ENCODE measurements at regions of chr22 and their contacts with region 1.

Region 1: GRCh38 chr22:50001388-50002231 is 11.0 kb downstream of the IL17REL start:
- DNase-seq: no peak
- ATAC-seq: no peak
- H3K4me3 ChIP-seq: no peak overlapping the region
- H3K27ac ChIP-seq: no peak overlapping the region
- H3K4me1 ChIP-seq: peaks cover 10% of the 10 kb centered on the region
- H3K27me3 ChIP-seq: no peaks in the 10 kb centered on the region
- CTCF ChIP-seq: no peak

Region 2: DNA sequence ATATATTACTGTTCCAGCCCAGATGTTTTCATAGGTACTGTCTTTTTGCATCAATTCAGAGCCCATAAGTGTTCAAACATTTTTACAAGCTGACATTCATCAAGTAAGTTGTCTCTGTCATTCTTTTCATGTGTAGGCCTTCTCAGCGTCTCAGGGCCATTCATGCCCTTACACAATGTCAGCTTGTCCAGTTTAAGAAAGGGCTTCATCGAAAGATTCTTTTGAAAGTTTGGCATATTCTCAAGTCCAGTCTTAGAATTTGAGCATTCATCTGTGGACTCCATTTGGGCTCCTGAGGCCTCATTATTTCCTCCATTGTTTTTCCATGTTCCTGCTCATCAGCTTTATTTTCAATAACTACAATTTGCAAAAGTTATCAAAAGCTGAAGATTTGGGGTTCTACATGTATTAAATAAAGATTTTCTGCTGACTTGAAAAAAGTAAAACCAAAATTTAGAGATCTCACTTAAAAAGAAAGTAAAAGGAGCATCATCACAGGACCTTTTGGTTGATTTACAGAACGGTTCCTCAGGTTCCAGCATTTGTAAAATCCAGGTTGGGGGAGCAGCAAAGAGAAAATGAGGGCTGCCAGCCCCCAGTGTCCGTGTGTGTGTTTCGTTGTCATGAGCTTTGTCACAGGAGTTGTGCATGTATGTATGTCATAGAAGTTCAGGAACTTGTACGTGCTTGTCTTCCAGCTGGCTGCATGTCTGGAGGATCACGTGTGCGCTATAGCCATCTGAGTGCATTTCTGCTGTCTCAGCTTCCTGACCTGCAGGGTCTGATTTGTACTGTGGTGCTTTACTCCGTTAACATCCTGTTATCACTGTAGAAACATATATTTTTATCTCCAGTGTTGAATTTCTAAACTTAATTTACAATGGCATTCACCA is 103.8 kb after region 1 on chr22:
- CTCF ChIA-PET with region 1: no interaction called
- POLR2A ChIA-PET with region 1: no interaction called
- in situ Hi-C with region 1: no loop called
- intact Hi-C with region 1: no loop called
- DNase-seq: no peak
- ATAC-seq: no peak
- H3K4me3 ChIP-seq: no peak overlapping the region
- H3K27ac ChIP-seq: no peak overlapping the region
- H3K4me1 ChIP-seq: no peaks in the 10 kb centered on the region
- H3K27me3 ChIP-seq: no peaks in the 10 kb centered on the region
- CTCF ChIP-seq: no peak

Region 3: GRCh38 chr22:50139843-50140415 is 138.3 kb after region 1 on chr22:
- CTCF ChIA-PET with region 1: no interaction called
- POLR2A ChIA-PET with region 1: interaction called, 11 read pairs
- in situ Hi-C with region 1: no loop called
- intact Hi-C with region 1: no loop called
- DNase-seq: no peak
- ATAC-seq: no peak
- H3K4me3 ChIP-seq: no peak overlapping the region
- H3K27ac ChIP-seq: no peak overlapping the region
- H3K4me1 ChIP-seq: peaks cover 3% of the 10 kb centered on the region; the same call in 1 of the 2 replicates
- H3K27me3 ChIP-seq: no peaks in the 10 kb centered on the region
- CTCF ChIP-seq: no peak

Region 4: GRCh38 chr22:50200461-50201190 is 199.0 kb after region 1 on chr22 and contains the start of gene SELENOO:
- CTCF ChIA-PET with region 1: no interaction called
- POLR2A ChIA-PET with region 1: no interaction called
- in situ Hi-C with region 1: no loop called
- intact Hi-C with region 1: no loop called
- DNase-seq: no peak
- ATAC-seq: peak; percentile 86
- H3K4me3 ChIP-seq: peak within 1 kb of the TSS; percentile 57 to 64
- H3K27ac ChIP-seq: peak within 1 kb of the TSS; percentile 66
- H3K4me1 ChIP-seq: peaks cover 14% of the 10 kb centered on the region
- H3K27me3 ChIP-seq: no peaks in the 10 kb centered on the region
- CTCF ChIP-seq: no peak
- total RNA-seq, gene SELENOO: 34.3 TPM